ENCODE measurements at regions of chr1 and their contacts with region 1.

Region 1: GRCh38 chr1:166910396-166910994 is 34.4 kb upstream of the TADA1 start:
- DNase-seq: peak; percentile 38 to 56
- H3K4me3 ChIP-seq: no peak overlapping the region
- H3K27ac ChIP-seq: no peak overlapping the region
- H3K4me1 ChIP-seq: no peaks in the 10 kb centered on the region
- H3K27me3 ChIP-seq: no peaks in the 10 kb centered on the region; a peak in 1 of 7 replicates
- CTCF ChIP-seq: peak in 2 of 3 experiments; percentile 89 to 92; a peak in 3 of 4 replicates
- EP300 ChIP-seq: no peak
- POLR2A ChIP-seq: no peak
- RAD21 ChIP-seq: peak; percentile 96 to 98

Region 2: DNA sequence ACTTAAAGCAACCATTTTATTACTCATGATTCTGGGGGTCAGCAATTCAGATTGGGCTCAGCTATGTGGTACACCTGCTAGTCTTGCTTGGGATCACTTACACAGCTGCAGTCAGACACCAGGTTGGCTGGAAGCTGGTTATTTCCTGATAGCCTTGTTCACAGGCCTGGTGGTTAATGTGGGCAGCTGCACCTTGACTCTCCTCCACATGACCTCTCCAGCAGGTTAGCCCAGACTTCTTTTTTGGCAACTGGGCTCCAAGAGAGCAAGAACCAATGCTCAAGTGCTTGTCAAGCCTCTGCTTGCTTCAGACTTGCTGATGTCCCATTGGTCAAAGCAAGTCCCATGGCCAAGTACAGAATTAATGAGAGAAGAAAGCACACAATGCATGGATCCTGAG is 83.1 kb before region 1 on chr1:
- CTCF ChIA-PET with region 1: no interaction called
- POLR2A ChIA-PET with region 1: no interaction called
- DNase-seq: no peak
- H3K4me3 ChIP-seq: no peak overlapping the region
- H3K27ac ChIP-seq: no peak overlapping the region
- H3K4me1 ChIP-seq: no peaks in the 10 kb centered on the region
- H3K27me3 ChIP-seq: no peaks in the 10 kb centered on the region; a peak in 1 of 7 replicates
- CTCF ChIP-seq: no peak
- EP300 ChIP-seq: no peak
- POLR2A ChIP-seq: no peak
- RAD21 ChIP-seq: no peak

Region 3: DNA sequence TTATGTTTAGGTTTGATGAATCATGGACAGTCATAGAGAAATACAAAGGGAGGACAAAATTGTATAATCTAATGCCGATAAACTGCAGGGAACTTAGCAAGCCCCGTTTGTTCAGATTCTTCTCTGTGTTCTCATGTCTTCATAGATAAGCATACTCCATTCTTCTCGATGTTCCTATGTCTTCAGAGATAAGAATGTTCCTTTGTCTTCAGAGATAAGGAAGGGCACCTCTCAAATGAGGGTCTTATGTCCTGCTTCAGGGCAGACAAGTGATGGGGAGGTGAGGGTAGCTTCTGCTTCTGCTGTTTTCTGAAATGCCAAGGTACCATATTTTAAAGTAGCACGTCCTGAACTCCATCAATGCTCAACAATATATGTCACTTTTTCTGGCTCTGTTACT is 14.7 kb before region 1 on chr1:
- CTCF ChIA-PET with region 1: interaction called, 17 read pairs
- POLR2A ChIA-PET with region 1: no interaction called
- DNase-seq: no peak
- H3K4me3 ChIP-seq: no peak overlapping the region
- H3K27ac ChIP-seq: no peak overlapping the region
- H3K4me1 ChIP-seq: no peaks in the 10 kb centered on the region
- H3K27me3 ChIP-seq: no peaks in the 10 kb centered on the region; a peak in 1 of 7 replicates
- CTCF ChIP-seq: no peak
- EP300 ChIP-seq: no peak
- POLR2A ChIP-seq: no peak
- RAD21 ChIP-seq: no peak

Region 4: DNA sequence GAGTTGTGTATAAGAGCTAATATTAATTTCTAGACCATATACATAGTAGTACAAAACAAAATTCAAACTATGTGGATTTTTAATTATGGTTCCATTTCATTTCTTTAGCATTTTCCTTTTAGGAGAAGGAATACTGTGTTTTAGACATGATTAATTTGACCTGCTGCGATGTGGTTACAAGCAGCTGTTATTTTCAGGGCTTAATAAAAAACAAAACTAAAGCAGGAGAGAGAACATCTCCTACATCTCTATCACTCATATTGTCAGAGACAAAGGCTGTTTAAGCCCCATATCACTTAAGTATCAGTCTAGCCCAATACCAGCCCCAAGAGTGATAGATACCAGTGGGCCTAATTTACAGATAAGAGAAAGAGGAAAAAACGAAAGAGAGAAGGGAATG is 17.2 kb after region 1 on chr1:
- CTCF ChIA-PET with region 1: interaction called, 14 read pairs
- POLR2A ChIA-PET with region 1: no interaction called
- DNase-seq: no peak
- H3K4me3 ChIP-seq: no peak overlapping the region
- H3K27ac ChIP-seq: no peak overlapping the region
- H3K4me1 ChIP-seq: peaks cover 0 to 11% (median 1%) of the 10 kb centered on the region in 4 experiments; a peak in 1 of 7 replicates
- H3K27me3 ChIP-seq: peaks cover 0 to under 1% (median under 1%) of the 10 kb centered on the region in 4 experiments; a peak in 3 of 7 replicates
- CTCF ChIP-seq: no peak
- EP300 ChIP-seq: no peak
- POLR2A ChIP-seq: no peak
- RAD21 ChIP-seq: no peak

Region 5: GRCh38 chr1:166999090-166999489 is 88.6 kb after region 1 on chr1:
- CTCF ChIA-PET with region 1: interaction called, 10 read pairs
- POLR2A ChIA-PET with region 1: no interaction called
- DNase-seq: no peak
- H3K4me3 ChIP-seq: no peak overlapping the region
- H3K27ac ChIP-seq: no peak overlapping the region
- H3K4me1 ChIP-seq: peaks cover 0 to 2% (median 0%) of the 10 kb centered on the region in 4 experiments; a peak in 1 of 7 replicates
- H3K27me3 ChIP-seq: no peaks in the 10 kb centered on the region
- CTCF ChIP-seq: no peak
- EP300 ChIP-seq: no peak
- POLR2A ChIP-seq: no peak
- RAD21 ChIP-seq: no peak

Region 6: GRCh38 chr1:167043752-167044488 is 133.4 kb after region 1 on chr1:
- CTCF ChIA-PET with region 1: interaction called, 11 read pairs
- POLR2A ChIA-PET with region 1: no interaction called
- DNase-seq: no peak
- H3K4me3 ChIP-seq: 0 out of 8 replicates have a peak overlapping the region, but pooled peaks of 1 of the 4 experiments have one; percentile 9
- H3K27ac ChIP-seq: no peak overlapping the region
- H3K4me1 ChIP-seq: peaks cover 0 to 3% (median 0%) of the 10 kb centered on the region in 4 experiments; a peak in 1 of 7 replicates
- H3K27me3 ChIP-seq: no peaks in the 10 kb centered on the region
- CTCF ChIP-seq: no peak
- EP300 ChIP-seq: no peak
- POLR2A ChIP-seq: no peak
- RAD21 ChIP-seq: no peak